AG04450 (cell line): ENCODE measurements at regions of chr15 and their contacts with region 1.

Region 1: DNA sequence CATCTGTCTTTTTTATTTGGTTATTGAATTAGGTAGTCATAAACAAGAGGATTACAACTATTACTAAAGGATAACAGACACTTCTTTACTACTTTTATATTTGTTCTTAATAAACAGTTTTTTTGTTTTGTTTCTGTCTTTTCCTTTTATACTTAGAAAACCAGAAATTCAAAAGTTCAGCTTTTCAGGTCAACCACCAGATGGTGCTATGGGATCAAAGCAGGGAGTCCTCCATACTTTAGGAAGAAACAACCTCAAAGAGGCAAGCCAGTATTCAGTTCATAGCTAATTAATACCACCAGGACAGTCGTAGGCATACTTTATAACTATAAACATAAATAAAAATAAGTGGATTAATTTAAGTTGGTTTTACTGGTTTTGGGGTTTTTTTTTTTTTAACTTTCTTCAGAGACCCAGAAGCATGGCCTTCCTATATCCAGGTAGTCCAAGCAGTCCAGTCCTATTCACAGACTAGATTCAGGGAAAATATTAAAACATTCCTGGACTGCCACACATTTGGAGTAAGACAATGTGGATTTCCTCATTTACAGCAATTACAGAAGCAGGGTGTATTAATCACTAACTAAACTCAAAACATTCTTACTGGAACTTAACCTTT is 16.0 kb upstream of the EID1 start:
- DNase-seq: no peak
- H3K4me3 ChIP-seq: no peak overlapping the region
- H3K27ac ChIP-seq: no peak overlapping the region
- H3K27me3 ChIP-seq: no peaks in the 10 kb centered on the region
- CTCF ChIP-seq: peak; percentile 88

Region 2: GRCh38 chr15:48541341-48542278 is 320.3 kb before region 1 on chr15:
- CTCF ChIA-PET with region 1: no interaction called
- POLR2A ChIA-PET with region 1: no interaction called
- DNase-seq: no peak
- H3K4me3 ChIP-seq: peak overlapping the region; percentile 45
- H3K27ac ChIP-seq: peak overlapping the region; percentile 72
- H3K27me3 ChIP-seq: no peaks in the 10 kb centered on the region
- CTCF ChIP-seq: no peak

Region 3: DNA sequence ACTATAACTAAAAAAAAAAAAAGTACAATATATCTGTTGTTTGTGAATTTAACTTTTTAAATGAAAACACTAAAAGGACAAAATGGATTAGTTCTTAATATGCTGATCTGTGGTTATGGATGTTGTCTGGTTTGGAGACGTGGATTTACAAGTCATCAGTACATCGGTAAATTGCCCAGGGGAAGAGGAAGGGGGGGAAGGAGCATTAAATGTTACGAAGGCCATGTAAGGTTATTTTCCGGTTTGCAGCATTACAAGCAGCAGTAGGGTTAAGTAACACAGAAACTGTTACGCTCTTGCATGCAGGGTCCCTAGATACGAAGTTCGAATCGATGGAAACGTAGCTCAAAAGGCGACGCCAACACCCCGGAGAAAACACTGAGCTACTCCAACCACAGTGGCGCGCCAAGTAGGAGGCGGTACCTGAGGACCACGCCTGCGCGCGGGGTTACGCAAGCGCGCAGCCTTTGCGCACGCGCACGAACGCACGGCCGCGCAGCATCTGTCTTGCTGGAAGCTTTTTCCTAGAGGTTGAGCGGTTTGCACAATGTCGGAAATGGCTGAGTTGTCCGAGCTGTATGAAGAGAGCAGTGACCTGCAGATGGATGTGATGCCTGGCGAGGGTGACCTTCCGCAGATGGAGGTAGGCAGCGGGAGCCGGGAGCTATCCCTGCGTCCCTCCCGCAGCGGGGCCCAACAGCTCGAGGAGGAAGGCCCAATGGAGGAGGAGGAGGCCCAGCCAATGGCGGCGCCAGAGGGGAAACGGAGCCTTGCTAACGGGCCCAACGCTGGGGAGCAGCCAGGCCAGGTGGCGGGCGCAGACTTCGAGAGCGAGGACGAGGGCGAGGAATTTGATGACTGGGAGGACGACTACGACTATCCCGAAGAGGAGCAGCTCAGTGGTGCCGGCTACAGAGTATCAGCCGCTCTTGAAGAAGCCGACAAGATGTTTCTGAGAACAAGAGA is 16.0 kb after region 1 on chr15 and contains the start of gene EID1:
- CTCF ChIA-PET with region 1: interaction called, 10 read pairs
- POLR2A ChIA-PET with region 1: interaction called, 10 read pairs
- DNase-seq: peak; percentile 90
- H3K4me3 ChIP-seq: peak within 1 kb of the TSS; percentile 87
- H3K27ac ChIP-seq: peak within 1 kb of the TSS; percentile 75
- H3K27me3 ChIP-seq: no peaks in the 10 kb centered on the region
- CTCF ChIP-seq: no peak
- polyA plus RNA-seq, gene EID1: 292 and 348 TPM in 2 replicates

Region 4: DNA sequence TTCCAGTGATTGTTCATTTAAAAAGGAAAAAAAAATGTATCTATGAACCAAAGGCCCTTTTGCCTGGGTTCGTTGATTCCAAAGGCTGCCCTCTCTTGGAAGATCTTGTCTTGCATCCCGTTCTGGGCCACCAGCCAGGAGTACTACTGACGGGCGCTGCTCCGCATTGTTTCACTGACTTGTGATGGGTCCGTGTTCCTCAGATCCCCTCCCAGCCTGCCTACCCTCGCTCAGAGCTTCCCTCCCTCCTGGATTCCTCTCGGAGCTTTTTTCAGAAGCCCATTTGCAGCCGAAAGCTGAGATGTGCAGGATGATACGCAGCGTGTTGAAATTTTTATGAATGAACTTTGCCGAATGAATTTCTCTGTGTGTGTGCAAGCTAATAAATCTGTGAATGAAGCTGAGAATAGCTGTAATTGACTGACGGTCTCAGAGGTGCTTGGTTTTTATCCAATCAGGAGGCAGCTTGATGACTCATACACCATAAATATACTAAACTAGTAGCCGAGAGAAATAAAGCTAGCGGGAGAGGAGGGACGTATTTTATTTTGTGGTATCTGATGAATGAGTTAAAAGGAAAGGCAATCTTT is 101.7 kb after region 1 on chr15 and contains the start of gene SHC4:
- CTCF ChIA-PET with region 1: interaction called, 45 read pairs
- POLR2A ChIA-PET with region 1: no interaction called
- DNase-seq: no peak
- H3K4me3 ChIP-seq: peak within 1 kb of the TSS; percentile 75
- H3K27ac ChIP-seq: peak within 1 kb of the TSS; percentile 62
- H3K27me3 ChIP-seq: no peaks in the 10 kb centered on the region
- CTCF ChIP-seq: peak; percentile 46
- polyA plus RNA-seq, gene SHC4: 5.1 TPM in 2 replicates

Region 5: DNA sequence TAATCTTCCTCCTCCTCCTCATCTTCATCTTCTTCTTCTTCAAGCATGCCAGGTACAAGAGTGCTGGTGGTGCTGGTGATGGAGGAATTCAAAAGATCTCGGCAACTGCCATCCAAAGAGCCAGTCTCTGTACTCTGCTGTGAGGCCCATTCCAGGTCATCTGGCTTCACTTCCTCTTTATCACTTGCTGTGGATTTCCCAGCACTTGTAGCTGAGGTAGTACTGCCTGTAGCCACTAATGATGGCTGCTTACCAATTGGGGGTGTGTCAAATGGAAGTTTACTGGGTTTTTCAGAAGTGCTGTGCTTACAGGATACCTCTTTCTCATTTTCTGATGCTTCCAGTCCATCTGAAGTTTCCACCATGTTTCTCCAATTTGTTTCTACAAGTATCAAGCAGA is 130.6 kb after region 1 on chr15:
- CTCF ChIA-PET with region 1: interaction called, 18 read pairs
- POLR2A ChIA-PET with region 1: interaction called, 3 read pairs
- DNase-seq: no peak
- H3K4me3 ChIP-seq: no peak overlapping the region
- H3K27ac ChIP-seq: no peak overlapping the region
- H3K27me3 ChIP-seq: no peaks in the 10 kb centered on the region
- CTCF ChIP-seq: no peak

Region 6: GRCh38 chr15:49145651-49146609 is 284.0 kb after region 1 on chr15:
- CTCF ChIA-PET with region 1: interaction called, 84 read pairs
- POLR2A ChIA-PET with region 1: no interaction called
- DNase-seq: no peak
- H3K4me3 ChIP-seq: no peak overlapping the region
- H3K27ac ChIP-seq: no peak overlapping the region
- H3K27me3 ChIP-seq: no peaks in the 10 kb centered on the region
- CTCF ChIP-seq: peak; percentile 79

Region 7: DNA sequence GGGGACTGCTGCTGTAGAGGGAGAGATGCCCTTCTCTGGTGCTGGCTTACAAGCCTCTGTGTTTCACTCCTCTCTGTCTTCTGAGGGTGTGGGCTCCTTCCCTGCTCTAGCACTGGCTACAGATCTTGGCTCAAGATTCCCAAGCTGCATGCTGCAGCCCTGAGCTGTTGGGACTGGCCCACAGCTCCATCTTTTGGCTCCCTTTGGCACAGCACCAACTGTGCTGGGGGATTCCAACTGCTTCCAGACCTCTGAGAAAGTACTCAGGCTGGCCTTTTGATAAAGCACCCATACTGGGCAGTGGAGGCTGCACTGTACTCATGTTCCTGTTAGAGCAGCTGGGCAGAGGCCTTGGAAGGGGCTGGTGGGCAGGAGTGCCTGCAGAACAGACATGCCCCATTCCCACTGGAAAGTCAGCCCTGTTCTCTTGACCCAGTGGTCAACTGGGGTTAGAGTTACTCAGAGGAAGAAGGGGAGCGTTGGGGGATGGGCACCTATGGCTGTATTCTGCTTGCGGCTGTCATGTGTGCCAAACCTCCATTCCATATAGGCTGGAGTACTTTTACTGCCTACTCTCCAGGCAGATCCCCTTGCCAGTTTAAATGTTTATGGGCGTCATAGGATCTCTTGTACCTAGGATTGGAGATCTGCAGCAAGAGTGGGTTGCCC is 363.8 kb after region 1 on chr15:
- CTCF ChIA-PET with region 1: interaction called, 10 read pairs
- POLR2A ChIA-PET with region 1: interaction called, 3 read pairs
- DNase-seq: no peak
- H3K4me3 ChIP-seq: no peak overlapping the region
- H3K27ac ChIP-seq: no peak overlapping the region
- H3K27me3 ChIP-seq: no peaks in the 10 kb centered on the region
- CTCF ChIP-seq: 0 out of 2 replicates have a peak, but pooled peaks have one; percentile 14